Aorta (tissue), 5 donors: ENCODE measurements at regions of chr14 and their contacts with region 1.

Region 1: DNA sequence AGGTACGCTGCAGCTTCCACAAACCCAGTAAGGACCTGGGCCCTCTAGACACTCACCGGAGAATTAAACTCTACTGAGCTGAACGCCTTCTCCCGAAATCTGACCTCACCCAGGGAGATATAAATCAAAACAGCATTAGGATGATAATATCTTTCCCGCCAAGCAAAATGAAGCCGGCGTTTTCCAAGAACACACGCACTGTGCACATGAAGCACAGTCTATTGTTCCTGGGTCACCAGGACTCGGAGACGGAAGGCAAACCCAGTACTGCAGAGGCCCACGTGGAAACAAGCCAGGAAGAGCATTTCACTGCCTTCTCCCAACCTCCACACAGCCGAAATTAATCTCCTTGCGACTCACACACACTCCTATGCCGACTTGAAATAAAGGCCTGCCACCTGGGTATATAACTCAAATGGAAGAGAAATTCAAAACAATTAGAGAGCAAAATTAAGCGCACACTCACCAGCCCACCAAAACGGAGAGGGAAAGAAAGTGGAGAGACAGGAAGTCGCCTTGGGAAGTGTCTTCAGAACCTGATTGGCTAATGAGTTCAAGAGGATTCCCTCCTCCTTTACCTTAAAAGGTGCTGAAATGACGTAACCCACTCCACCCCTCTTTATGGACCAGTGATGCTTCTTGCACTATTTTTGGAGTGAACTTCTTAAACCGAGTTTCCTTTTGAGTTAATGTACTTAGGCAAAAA is at the start of gene CCNB1IP1:
- DNase-seq: peak; percentile 56 to 79
- ATAC-seq: peak; percentile 96
- H3K4me3 ChIP-seq: peak within 1 kb of the TSS; percentile 98
- H3K27ac ChIP-seq: peak within 1 kb of the TSS; percentile 93 to 97
- H3K4me1 ChIP-seq: no peaks in the 10 kb centered on the region
- H3K27me3 ChIP-seq: no peaks in the 10 kb centered on the region
- total RNA-seq, gene CCNB1IP1: 34.6 to 50.9 TPM

Region 2: DNA sequence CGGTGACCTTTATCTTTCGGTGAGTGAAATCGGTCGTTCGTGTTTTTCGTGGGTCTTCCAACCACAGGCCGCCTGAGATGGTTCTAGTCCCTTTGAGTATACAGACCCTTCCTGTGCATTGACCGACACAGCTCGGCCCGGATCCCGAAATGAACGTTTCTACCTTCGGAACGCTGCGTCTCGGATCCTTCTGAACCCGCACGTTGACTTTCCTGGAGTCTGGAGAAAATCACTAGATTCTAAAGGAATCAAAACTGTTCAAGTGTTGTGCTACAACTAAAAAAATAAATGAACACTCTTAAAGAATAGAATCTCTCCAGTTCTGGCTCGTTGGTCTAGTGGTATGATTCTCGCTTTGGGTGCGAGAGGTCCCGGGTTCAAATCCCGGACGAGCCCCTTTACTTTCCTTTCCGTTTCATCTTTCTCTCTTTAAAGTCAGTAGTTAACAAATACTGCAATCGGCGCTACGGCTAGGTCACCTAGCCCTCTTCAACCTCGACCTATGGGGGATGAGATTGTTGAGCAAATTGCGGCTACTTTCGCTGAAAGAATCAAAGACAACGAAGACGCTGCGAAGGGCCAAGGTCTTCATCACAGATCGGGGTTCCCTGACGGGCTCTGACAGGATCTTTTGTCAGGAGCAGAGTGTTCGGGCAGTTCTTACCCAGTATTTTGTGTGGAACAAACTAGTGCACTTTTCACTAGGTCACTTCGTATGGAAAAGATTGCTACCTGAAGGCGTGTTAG is 299.9 kb after region 1 on chr14:
- intact Hi-C with region 1: no loop called
- DNase-seq: no peak
- ATAC-seq: peak; percentile 70
- H3K4me3 ChIP-seq: no peak overlapping the region
- H3K27ac ChIP-seq: no peak overlapping the region
- H3K4me1 ChIP-seq: no peaks in the 10 kb centered on the region
- H3K27me3 ChIP-seq: no peaks in the 10 kb centered on the region

Region 3: DNA sequence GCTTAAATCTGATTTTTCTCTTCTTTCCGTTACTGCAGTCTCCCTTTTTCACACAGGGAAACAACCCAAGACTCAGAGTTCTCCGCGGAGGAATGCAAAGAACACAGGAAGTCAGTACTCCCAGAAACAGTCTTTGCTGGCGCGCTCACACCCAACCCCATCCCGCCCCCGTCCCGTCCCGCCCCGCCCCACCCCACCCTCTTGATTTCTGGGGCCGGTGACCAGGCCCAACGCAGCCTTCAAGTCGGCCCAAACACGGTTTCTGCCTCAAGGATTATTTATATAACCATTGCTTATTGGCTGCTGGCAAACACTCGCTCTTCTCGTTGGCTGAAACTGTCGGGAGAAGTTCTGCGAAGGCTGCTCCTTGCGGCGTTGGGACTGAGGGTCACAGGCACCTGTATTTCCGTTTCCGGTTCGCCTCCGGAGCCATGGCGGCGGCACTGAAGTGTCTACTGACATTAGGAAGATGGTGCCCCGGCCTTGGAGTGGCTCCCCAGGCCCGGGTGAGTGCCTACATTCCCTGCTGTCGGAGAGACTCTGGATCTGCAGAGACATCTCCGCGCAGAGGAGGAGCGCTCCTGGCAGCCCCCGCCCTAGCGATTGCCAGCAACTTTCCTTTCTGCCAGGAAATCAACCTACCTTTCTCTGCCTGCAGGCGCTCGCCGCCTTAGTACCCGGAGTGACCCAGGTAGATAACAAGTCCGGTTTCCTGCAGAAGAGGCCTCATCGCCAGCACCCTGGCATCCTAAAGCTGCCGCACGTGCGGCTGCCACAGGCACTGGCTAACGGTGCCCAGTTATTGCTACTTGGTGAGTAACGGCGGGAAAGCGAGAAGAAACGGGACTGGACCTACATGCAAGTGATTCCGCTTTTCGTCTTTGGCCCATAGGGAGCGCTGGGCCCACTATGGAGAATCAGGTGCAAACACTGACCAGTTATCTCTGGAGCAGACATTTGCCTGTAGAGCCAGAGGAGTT is 656.9 kb after region 1 on chr14 and contains the start of gene METTL17:
- intact Hi-C with region 1: loop called in 1 of 2 experiments (anchors 10 kb)
- DNase-seq: peak; percentile 94 to 95
- ATAC-seq: peak; percentile 94
- H3K4me3 ChIP-seq: peak within 1 kb of the TSS; percentile 85 to 89
- H3K27ac ChIP-seq: peak within 1 kb of the TSS; percentile 91 to 99
- H3K4me1 ChIP-seq: peaks cover 3 to 10% of the 10 kb centered on the region in 2 donors
- H3K27me3 ChIP-seq: no peaks in the 10 kb centered on the region
- total RNA-seq, gene METTL17: 33.5 to 57.0 TPM